Right ventricle myocardium inferior (tissue), 1 donor: ENCODE measurements at regions of chr17 and their contacts with region 1.

Region 1: GRCh38 chr17:61009663-61010062 is 332.0 kb downstream of the BCAS3 start:
- DNase-seq: no peak
- ATAC-seq: no peak

Region 2: GRCh38 chr17:61037822-61038221 is 28.2 kb after region 1 on chr17:
- intact Hi-C with region 1: no loop called
- DNase-seq: no peak
- ATAC-seq: no peak

Region 3: GRCh38 chr17:61088553-61088952 is 78.9 kb after region 1 on chr17:
- intact Hi-C with region 1: no loop called
- DNase-seq: no peak
- ATAC-seq: no peak

Region 4: DNA sequence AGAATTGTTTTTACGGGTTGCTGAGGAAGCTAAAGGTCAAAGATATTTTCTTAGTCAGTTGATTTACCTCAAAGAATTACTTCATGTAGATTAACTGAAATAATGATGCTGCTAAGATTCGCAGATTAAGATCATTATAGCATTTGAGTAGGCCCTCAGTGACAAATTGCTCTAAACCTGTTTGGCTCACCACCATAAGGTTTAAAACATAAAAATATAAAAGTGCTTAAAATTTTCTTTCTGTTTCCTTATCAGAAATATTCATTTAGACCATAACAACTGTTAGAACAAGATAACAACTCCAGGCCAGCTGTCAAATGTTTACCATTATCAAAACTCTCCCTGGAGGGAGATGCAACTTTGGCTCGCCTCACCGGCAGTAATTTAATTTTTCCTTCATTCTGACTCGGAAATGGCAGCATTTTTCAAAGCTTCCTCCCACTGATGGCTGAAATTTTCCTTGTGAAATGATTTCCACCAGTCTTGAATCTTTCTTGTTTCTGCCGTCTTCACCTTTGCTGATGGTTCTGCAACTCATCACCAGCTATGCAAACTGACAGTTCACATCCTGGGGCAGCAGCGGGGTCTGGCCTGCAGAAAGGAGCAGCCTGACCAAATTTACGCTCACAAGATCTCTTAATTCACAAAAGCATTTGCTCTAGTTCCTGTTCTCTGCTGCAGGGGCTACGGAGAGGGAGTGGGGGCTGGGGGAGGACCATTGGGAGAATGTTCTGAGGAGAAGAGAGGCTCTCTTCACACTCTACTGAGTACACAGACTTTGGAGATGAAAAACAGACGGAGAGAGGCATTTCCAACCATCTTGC is 135.3 kb after region 1 on chr17:
- intact Hi-C with region 1: loop called (anchors 5 kb)
- DNase-seq: no peak
- ATAC-seq: no peak